ENCODE measurements at regions of chr1 and their contacts with region 1.

Region 1: GRCh38 chr1:116139592-116140134 is 28.5 kb downstream of the MAB21L3 start:
- DNase-seq: no peak
- H3K4me3 Mint-ChIP-seq: no peak overlapping the region
- H3K27ac Mint-ChIP-seq: no peak overlapping the region
- H3K4me1 Mint-ChIP-seq: peaks cover 7% of the 10 kb centered on the region
- H3K27me3 Mint-ChIP-seq: no peaks in the 10 kb centered on the region

Region 2: DNA sequence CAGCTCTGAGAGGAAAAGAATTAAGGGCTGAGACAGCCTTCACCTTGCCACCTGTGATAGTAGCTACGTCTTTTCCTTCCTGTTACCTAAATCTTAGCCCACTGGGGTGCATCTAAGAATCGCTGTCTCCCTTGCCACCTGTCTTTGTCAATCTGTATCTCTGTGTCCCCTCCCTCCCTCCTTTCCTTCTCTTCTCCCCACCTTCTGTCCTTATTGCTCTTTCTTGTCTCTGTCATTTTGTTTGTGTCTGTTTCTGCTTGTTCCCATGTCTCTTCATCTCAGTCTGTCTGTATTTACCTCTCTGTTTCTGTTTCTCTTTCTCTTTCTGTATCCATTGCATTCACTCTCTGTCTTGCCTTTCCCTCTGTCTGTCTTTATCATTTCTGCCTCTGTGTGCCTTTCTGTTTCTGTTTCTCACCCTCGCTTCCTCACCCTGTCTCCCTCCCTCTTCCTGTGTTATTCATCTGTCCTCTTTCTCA is 133.1 kb before region 1 on chr1:
- CTCF ChIA-PET with region 1: no interaction called
- intact Hi-C with region 1: no loop called
- DNase-seq: peak; percentile 10
- H3K4me3 Mint-ChIP-seq: peak overlapping the region; percentile 63
- H3K27ac Mint-ChIP-seq: peak overlapping the region; percentile 42
- H3K4me1 Mint-ChIP-seq: peaks cover 11% of the 10 kb centered on the region
- H3K27me3 Mint-ChIP-seq: no peaks in the 10 kb centered on the region

Region 3: DNA sequence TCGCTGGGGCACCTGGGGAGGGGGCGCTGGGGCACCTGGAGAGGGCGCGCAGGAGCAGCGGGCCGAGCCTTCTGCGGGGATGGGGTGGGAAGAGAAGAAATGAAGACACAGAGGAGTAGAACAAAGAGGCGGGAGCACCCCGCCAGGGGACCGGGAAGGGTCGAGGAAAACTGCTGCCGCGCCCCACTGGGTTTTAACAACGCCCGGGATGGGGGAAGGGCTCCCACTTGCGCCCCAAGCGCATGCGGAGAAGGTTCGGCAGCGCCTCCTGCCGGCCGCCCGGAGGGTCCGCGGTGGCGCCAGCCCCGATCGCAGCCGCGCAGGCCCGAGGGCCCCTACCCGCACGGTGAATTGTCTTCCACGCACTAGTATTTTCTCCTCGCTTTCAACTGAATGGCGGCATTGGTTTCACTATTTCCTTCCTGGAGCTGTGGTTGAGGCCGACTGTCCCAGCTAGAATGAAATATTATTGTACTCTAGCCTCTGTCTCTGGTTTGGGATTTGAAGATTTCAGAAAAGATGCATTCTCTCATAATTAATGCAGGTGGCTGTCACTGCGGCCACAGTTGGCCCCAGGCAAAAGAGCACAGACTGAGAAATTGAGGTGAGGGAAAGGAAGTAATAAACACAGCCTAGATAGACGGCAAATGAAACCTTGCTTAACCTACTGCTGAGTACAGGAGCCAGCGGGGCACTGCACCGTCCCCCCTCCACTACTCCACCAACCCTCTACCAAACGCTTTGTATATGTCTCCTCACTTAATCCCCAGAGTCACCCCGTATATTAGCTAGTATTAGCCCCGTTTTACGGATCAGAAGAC is 28.8 kb after region 1 on chr1:
- CTCF ChIA-PET with region 1: interaction called, 28 read pairs
- intact Hi-C with region 1: loop called (anchors 1 kb)
- DNase-seq: peak; percentile 88
- H3K4me3 Mint-ChIP-seq: peak overlapping the region; percentile 74
- H3K27ac Mint-ChIP-seq: no peak overlapping the region
- H3K4me1 Mint-ChIP-seq: peaks cover 8% of the 10 kb centered on the region
- H3K27me3 Mint-ChIP-seq: no peaks in the 10 kb centered on the region

Region 4: GRCh38 chr1:116232989-116233514 is 93.4 kb after region 1 on chr1:
- CTCF ChIA-PET with region 1: interaction called, 4 read pairs
- intact Hi-C with region 1: loop called (anchors 1 kb)
- DNase-seq: peak; percentile 25
- H3K4me3 Mint-ChIP-seq: no peak overlapping the region
- H3K27ac Mint-ChIP-seq: no peak overlapping the region
- H3K4me1 Mint-ChIP-seq: peaks cover 17% of the 10 kb centered on the region
- H3K27me3 Mint-ChIP-seq: no peaks in the 10 kb centered on the region

Region 5: DNA sequence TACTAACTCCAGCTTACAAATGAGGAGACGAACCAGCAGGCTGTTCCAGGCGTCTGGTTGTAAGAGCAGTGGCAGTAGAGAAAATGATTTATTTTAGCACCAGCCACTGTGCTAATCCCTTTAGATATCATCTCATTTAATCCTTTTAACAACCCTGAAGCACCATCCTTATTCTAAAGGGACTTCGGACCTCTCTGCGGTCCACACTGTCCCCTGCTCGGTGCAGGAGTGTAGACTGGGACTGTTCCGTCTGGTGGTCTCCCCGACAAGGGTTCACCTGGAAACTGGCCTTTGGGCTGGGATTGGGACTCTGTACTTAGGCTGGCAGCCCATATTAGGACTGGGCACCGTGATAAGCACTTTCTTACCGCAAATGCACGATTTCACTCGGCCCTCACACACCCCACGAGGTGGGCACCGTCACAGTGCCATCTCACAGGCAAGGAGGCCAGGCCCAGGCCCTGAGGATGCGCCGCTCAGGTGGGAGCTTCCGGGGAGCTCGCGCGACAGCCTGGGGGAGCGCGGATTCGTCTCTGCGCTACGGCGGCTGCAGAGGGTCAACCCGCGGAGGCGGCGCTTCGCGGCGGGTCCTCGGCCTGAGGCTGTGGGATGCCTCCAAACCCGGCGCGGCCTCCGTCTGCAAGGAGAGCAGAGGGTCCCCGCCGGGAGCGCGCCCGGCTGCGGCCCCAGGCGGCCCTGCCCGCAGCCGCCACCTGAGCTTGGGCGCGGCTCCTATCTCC is 278.6 kb after region 1 on chr1:
- CTCF ChIA-PET with region 1: interaction called, 7 read pairs
- intact Hi-C with region 1: loop called (anchors 1 kb)
- DNase-seq: peak; percentile 88
- H3K4me3 Mint-ChIP-seq: peak overlapping the region; percentile 87
- H3K27ac Mint-ChIP-seq: peak overlapping the region; percentile 78
- H3K4me1 Mint-ChIP-seq: peaks cover 32% of the 10 kb centered on the region
- H3K27me3 Mint-ChIP-seq: no peaks in the 10 kb centered on the region

Region 6: DNA sequence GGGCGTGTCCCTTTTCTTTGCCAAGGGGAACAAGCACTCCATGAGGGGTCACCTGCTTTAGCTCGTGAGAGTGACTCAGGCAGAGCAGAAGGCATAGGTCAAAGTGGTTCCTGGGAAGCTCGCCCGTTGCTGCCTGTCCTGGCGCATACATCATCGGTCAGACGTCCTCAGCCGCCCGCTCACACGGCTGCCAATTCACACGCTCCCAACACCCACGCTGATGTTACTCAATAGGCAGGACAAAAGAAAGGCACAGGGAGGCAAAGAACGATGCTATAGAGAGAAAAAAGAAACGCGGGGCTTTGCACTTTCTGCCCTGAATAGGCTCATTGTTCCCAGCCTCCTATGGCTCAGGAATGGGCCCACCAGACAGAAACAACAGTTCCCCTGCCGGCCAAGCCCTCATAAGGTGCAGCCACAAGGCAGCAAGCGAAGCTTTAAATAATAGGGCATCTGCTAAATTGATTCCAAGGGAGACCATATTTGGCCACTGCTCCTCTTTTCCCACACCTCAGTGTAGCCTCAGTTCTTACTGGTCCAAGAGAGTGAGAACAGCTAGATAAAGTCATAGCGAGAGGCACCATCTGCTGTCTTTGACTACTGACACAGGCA is 1032.3 kb after region 1 on chr1:
- CTCF ChIA-PET with region 1: no interaction called
- intact Hi-C with region 1: no loop called
- DNase-seq: no peak
- H3K4me3 Mint-ChIP-seq: no peak overlapping the region
- H3K27ac Mint-ChIP-seq: no peak overlapping the region
- H3K4me1 Mint-ChIP-seq: no peaks in the 10 kb centered on the region
- H3K27me3 Mint-ChIP-seq: peaks cover 2% of the 10 kb centered on the region